Activated CD4-positive, alpha-beta T cell treated with anti-CD3 and anti-CD28 coated beads for 36 hours (primary cell): ENCODE measurements at regions of chr11 and their contacts with region 1.

Region 1: GRCh38 chr11:85694386-85694980 is 8.5 kb upstream of the CCDC89 start:
- DNase-seq: peak; percentile 16
- ATAC-seq: no peak
- H3K4me3 Mint-ChIP-seq: no peak overlapping the region
- H3K27ac Mint-ChIP-seq: no peak overlapping the region
- H3K4me1 Mint-ChIP-seq: peaks cover 19% of the 10 kb centered on the region
- H3K27me3 Mint-ChIP-seq: no peaks in the 10 kb centered on the region

Region 2: DNA sequence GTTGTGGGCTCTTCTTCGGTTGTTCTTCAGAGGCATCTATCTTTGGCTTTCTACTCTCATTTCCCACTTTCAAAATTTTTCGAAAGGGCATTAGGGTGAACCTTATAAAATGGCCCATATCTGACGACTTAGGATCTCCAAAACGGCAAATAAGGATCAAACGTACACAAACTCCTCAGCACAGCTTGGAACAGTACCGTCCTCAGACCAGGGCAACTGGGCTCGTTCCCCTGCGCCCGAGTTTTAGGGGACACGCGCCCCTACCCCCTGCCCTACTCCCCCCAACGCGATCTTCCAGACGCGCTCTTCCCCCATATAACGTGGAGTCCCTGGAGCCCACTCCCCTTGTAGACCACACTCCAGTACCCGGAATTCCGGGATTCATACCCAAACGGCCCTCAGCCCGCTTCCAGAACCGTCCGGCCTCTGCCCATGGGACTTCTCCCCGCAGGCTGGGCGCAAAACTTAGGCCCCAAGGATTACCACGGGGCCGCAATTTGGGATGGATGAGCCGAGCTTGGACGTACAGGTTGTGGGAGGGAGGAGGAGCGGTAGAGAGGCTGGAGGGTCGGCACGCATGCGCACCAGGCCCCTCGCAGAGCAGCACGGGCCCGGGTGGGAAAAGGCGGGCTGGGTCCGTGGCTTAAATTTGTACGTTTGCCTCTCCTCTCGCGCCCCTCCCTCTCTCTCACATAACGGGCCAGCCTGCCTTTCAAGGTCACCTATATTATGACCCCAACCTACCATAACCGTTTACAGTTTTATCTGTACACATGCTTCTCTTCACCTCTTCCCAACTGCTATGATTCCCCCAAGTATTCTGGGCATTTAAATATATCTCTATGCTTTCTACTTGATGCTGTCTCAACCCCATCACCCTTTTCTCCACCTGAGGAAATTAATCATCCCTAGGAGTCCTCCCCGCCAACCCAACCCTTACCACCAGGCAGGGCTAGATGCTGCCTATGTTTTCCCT is 11.9 kb before region 1 on chr11:
- CTCF ChIA-PET with region 1: interaction called, 22 read pairs
- POLR2A ChIA-PET with region 1: no interaction called
- intact Hi-C with region 1: no loop called
- DNase-seq: peak; percentile 81
- ATAC-seq: peak; percentile 90
- H3K4me3 Mint-ChIP-seq: peak overlapping the region; percentile 77
- H3K27ac Mint-ChIP-seq: peak overlapping the region; percentile 87
- H3K4me1 Mint-ChIP-seq: peaks cover 16% of the 10 kb centered on the region
- H3K27me3 Mint-ChIP-seq: peaks cover 5% of the 10 kb centered on the region